OCI-LY7 (cell line): ENCODE measurements at regions of chr4 and their contacts with region 1.

Region 1: GRCh38 chr4:109977854-109978501 is 65.3 kb downstream of the EGF start:
- DNase-seq: peak; percentile 62
- H3K4me3 ChIP-seq: no peak overlapping the region
- H3K27ac ChIP-seq: no peak overlapping the region
- H3K4me1 ChIP-seq: peaks cover 7% of the 10 kb centered on the region
- CTCF ChIP-seq: peak; percentile 89

Region 2: DNA sequence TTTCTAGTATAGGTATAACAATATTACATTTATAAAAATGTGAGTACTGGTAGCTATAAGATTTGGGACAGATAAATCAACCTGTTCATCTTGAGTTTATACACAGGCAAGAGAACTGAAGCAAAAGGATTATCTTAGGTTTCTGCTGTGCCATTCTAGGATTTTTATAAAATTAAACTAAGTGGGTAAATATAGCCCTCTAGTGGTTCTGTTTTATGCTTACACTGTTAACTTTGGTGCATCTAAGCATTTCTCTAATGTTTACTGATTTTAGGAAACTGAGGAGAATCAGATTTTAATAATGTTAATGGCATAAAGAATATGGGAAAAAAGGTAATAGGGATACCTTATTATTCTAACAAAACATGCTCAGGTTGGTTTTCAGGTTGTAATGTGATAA is 151.3 kb before region 1 on chr4:
- CTCF ChIA-PET with region 1: interaction called, 3 read pairs
- POLR2A ChIA-PET with region 1: no interaction called
- intact Hi-C with region 1: loop called (anchors 5 kb)
- DNase-seq: peak; percentile 47
- H3K4me3 ChIP-seq: no peak overlapping the region
- H3K27ac ChIP-seq: no peak overlapping the region
- H3K4me1 ChIP-seq: no peaks in the 10 kb centered on the region
- CTCF ChIP-seq: peak; percentile 87

Region 3: GRCh38 chr4:110411574-110412011 is 433.6 kb after region 1 on chr4:
- CTCF ChIA-PET with region 1: no interaction called
- POLR2A ChIA-PET with region 1: no interaction called
- intact Hi-C with region 1: no loop called
- DNase-seq: no peak
- H3K4me3 ChIP-seq: no peak overlapping the region
- H3K27ac ChIP-seq: no peak overlapping the region
- H3K4me1 ChIP-seq: no peaks in the 10 kb centered on the region
- CTCF ChIP-seq: no peak